Activated T-helper 2 cell treated with anti-CD3 and anti-CD28 coated beads, Interferon-gamma antibody, Interleukin-2, Interleukin-4, amounts not matched to agents 10 μg/mL and 5 μg/mL and 100 μg/mL, durations not matched to agents 14 hours and 24 hours and 36 hours (primary cell): ENCODE measurements at regions of chr3 and their contacts with region 1.

Region 1: GRCh38 chr3:106247902-106248684 is 379.3 kb upstream of the CBLB start:
- DNase-seq: no peak
- H3K4me3 Mint-ChIP-seq: no peak overlapping the region
- H3K27ac Mint-ChIP-seq: no peak overlapping the region
- H3K4me1 Mint-ChIP-seq: peaks cover 15% of the 10 kb centered on the region
- H3K27me3 Mint-ChIP-seq: no peaks in the 10 kb centered on the region

Region 2: DNA sequence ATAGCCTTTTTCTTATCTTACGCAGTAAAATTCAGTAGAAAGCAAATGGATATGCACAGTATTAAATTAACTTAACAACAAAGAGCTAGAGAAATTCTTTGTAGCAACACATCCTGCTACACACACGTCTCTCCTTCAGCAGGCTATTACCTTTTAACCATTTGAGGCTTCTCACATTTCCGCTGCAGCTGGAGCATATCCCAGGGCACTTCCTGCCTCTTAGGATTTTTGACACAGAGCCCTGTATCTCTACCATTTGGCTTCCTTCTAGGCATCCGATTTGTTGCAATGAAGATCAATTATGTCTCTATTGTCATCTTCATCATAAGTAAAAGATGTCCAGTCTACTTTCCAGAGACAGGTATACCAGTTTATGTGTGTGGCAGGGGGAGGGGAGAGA is 86.8 kb before region 1 on chr3:
- intact Hi-C with region 1: no loop called
- DNase-seq: no peak
- H3K4me3 Mint-ChIP-seq: no peak overlapping the region
- H3K27ac Mint-ChIP-seq: no peak overlapping the region
- H3K4me1 Mint-ChIP-seq: no peaks in the 10 kb centered on the region
- H3K27me3 Mint-ChIP-seq: no peaks in the 10 kb centered on the region

Region 3: DNA sequence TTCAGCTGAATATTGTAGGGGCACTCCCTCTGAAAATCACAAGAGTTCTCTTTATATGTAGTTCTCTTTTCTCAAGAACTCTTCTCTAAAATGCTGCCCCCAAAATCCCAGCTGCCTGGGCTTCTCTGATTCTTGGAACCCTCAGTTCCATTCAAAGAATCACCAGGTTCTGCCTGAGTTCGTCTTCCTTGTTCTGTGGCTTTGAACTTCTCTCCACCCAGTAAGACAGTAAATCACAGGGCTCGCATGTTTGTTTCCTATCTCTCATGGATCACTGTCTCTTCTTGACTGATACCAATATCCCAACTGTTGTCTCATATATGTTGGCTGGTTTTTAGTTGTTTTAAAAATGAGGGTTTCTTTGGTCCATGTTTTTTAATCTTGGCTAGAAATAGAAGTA is 19.8 kb before region 1 on chr3:
- intact Hi-C with region 1: no loop called
- DNase-seq: no peak
- H3K4me3 Mint-ChIP-seq: no peak overlapping the region
- H3K27ac Mint-ChIP-seq: peak overlapping the region; percentile 55
- H3K4me1 Mint-ChIP-seq: peaks cover 38% of the 10 kb centered on the region
- H3K27me3 Mint-ChIP-seq: no peaks in the 10 kb centered on the region

Region 4: GRCh38 chr3:106276755-106277612 is 28.9 kb after region 1 on chr3:
- intact Hi-C with region 1: no loop called
- DNase-seq: no peak
- H3K4me3 Mint-ChIP-seq: no peak overlapping the region
- H3K27ac Mint-ChIP-seq: no peak overlapping the region
- H3K4me1 Mint-ChIP-seq: peaks cover 27% of the 10 kb centered on the region
- H3K27me3 Mint-ChIP-seq: no peaks in the 10 kb centered on the region

Region 5: GRCh38 chr3:106299300-106300098 is 51.4 kb after region 1 on chr3:
- intact Hi-C with region 1: loop called (anchors 5 kb)
- DNase-seq: peak; percentile 13
- H3K4me3 Mint-ChIP-seq: no peak overlapping the region
- H3K27ac Mint-ChIP-seq: peak overlapping the region; percentile 66
- H3K4me1 Mint-ChIP-seq: peaks cover 50% of the 10 kb centered on the region
- H3K27me3 Mint-ChIP-seq: no peaks in the 10 kb centered on the region